ENCODE measurements at regions of chr16 and their contacts with region 1.

Region 1: GRCh38 chr16:82603784-82604411 is 22.9 kb upstream of the CDH13 start:
- DNase-seq: peak; percentile 21
- H3K4me3 ChIP-seq: no peak overlapping the region
- CTCF ChIP-seq: peak; percentile 86

Region 2: DNA sequence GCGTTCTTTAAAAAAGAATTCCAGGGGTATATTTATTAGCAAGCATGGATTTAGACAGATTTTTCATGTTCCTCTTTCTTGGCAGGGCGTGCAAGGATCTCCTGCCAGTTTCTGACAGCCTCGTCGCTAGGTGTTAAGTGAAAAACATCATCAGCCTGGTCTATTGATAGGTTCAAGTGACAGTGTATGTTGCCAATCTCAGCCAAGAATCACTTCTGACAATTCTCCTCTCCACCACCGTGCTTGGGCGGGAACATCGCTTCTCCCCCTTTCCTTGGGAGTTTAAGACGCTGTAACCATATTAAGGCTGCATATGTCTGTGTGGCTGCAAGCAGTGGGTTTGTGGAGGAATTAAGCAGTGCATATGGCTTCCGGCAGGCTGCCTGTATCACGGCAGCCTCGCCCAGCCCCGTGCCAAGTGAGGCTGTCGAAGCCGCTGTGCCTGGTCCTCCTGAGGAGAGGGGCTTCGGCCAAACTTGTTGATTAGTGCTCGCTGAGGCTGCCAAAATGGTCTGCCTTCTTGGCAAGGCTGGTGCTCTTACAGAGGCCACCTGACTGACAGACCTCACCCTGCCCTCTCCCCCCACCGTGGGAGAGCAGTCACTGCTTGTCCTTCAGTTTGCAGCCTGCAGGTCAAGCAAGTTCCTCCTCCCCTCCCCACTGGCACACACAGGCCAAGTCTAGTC is 301.7 kb before region 1 on chr16:
- CTCF ChIA-PET with region 1: no interaction called
- POLR2A ChIA-PET with region 1: no interaction called
- DNase-seq: no peak
- H3K4me3 ChIP-seq: no peak overlapping the region
- CTCF ChIP-seq: no peak

Region 3: DNA sequence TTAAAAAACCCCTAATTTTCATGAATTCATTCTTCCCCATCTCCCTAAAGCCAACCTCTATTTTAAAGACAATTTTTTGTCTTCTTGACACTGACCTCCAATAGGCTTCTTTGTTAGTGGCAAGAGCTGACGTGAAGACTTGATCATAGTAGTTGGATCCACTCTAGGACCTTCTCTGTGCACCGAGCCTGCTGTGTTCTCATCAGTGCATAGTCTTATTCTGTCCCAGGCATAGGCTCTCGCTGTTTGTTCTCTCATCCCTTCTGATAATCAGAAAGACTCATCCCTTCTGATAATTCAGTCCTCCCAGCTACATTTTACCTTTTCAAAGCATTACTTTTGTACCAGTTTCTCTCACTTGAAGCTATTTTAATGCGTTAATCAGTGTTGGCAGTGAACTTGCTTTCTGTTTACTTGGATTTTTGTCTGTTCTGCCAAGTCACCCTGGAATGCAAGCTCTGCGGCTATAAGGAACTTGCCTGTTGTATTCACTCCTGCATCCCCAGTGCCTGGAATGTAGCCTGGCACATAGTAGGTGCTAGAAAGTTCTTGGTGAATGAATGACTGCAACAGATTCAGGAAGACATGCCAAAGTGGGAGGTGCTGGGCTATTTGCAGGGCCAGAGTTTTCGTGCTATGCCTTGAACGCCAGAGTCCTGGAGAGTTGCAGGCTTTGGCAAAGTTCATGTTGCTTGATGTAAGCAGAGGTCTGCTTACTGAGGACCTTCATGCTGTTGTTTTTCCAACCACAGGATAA is 286.3 kb before region 1 on chr16:
- CTCF ChIA-PET with region 1: no interaction called
- POLR2A ChIA-PET with region 1: no interaction called
- DNase-seq: no peak
- H3K4me3 ChIP-seq: no peak overlapping the region
- CTCF ChIP-seq: no peak

Region 4: GRCh38 chr16:82621796-82622195 is 17.9 kb after region 1 on chr16:
- CTCF ChIA-PET with region 1: interaction called, 11 read pairs
- POLR2A ChIA-PET with region 1: no interaction called
- DNase-seq: no peak
- H3K4me3 ChIP-seq: no peak overlapping the region
- CTCF ChIP-seq: peak; percentile 4

Region 5: GRCh38 chr16:82761236-82761635 is 157.3 kb after region 1 on chr16:
- CTCF ChIA-PET with region 1: no interaction called
- POLR2A ChIA-PET with region 1: no interaction called
- DNase-seq: no peak
- H3K4me3 ChIP-seq: no peak overlapping the region
- CTCF ChIP-seq: no peak

Region 6: DNA sequence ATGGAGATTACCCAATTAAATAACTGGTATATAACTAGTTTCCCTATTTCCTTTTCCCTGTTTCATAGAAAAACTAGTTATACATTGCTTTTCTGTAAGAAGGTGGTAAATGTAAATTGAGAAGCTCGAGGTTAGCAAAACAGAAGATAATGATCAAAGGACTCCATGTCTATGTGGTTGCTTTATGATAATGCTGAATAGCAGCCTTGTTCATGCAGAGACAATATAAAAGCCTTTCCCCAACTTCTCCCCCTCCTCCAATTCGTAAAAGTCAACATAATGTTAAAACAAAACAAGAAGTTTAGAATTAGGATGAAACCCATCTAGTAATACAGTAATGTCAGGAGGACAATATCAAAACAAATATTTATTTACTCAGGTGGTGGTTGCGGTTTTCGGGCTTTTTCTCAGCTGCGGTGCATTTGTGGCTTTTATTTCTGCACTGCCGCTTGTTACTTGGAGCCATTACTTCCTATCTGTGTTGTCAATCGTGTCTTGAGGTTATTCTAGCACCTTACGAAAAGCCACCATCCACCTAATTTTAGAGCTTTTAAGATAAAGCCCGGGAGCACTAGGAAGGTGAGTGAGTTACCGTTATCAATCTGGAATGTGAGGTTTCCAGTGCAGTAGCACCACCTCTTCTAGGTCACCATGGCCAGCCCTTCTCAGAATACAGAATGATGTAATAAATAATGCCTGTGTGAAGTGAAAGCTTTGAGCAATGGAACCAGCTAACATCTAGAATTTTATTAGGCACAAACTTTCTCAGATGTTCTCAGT is 320.4 kb after region 1 on chr16:
- CTCF ChIA-PET with region 1: no interaction called
- POLR2A ChIA-PET with region 1: no interaction called
- DNase-seq: no peak
- H3K4me3 ChIP-seq: no peak overlapping the region
- CTCF ChIP-seq: no peak

Region 7: DNA sequence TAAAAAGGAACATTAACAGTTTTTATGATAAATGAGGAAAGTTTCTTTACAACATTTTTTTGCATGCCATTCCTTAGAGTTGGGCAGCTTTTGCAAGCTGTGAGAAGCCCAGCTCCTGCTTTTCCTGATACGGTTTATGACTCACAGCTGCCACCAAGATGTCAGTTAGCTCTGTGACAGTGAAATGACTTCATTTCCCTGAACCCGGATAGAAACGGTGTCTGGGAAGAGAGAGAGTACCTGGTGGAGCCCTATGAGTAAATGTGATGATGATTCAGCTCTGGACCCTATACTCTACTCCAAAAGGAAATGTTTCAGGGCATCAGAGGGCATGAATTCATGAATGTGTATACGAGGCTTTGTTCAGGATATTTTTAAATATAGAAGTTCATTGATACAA is 837.6 kb after region 1 on chr16:
- CTCF ChIA-PET with region 1: interaction called, 13 read pairs
- POLR2A ChIA-PET with region 1: no interaction called
- DNase-seq: no peak
- H3K4me3 ChIP-seq: no peak overlapping the region
- CTCF ChIP-seq: no peak

Measured in AG04449 (cell line).